B cell (primary cell): ENCODE measurements at regions of chr13 and their contacts with region 1.

Region 1: DNA sequence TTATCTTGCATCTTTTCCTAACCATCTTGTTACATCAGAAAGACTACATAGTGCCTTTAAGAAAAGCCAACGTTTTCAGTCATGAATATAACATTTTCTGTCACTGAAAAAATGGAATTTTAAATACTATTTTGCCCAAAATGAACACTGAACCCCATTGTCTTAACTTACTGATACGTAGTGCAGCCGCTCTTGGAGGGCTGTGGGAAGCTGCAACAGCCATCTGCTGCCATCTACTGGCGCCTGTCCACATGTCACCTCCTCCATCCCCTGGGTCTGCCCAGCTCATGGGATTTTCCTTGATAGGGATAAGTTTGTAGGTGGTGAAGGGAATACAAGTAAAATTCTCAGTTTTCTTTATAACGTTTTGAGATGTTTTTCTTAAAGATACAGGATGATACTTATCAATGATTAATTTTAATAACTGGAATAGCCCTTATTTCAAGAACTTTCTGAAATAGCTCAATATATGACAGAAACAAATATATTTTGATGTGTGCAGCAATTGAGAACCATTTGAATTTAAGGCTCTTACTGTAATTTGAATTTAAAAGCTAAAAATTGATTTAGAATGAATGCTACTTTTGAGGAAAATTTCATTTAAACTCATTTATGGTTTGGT is 73.7 kb downstream of the GGACT start:
- DNase-seq: peak; percentile 74
- ATAC-seq: peak; percentile 84
- H3K4me3 ChIP-seq: no peak overlapping the region
- H3K4me3 Mint-ChIP-seq: no peak overlapping the region
- H3K27ac ChIP-seq: no peak overlapping the region
- H3K27ac Mint-ChIP-seq: no peak overlapping the region
- H3K4me1 ChIP-seq: no peaks in the 10 kb centered on the region
- H3K4me1 Mint-ChIP-seq: peaks cover 3% of the 10 kb centered on the region
- H3K27me3 ChIP-seq: no peaks in the 10 kb centered on the region
- H3K27me3 Mint-ChIP-seq: no peaks in the 10 kb centered on the region
- CTCF ChIP-seq: peak; percentile 95

Region 2: DNA sequence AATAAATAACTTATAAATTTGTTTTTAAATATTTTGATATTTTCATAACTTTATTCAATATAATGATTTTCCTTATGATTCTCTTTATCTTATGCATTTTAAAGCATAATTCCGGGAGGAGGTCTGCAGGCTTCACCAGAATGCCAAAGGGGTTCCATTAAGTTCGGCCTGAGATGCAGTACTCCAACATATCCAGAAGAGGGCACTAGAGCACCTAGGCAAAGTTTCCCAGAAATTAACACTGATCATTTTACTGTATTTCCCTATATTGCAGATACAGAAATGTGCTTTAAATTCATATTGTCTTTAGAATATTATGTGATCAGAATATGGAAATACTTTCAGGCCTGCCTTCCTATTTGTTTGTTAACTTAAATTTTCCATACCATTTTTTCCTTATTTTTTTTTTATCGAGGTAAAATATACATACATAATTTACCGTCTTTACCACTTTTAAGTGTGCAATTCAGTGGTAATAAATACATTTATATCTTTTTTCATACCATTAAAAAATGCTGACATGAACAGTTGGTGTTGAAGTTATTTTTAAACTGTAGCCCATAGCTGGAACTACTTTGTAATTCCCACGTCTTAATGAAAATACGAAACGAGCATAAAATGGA is 1072.5 kb before region 1 on chr13:
- CTCF ChIA-PET with region 1: interaction called, 8 read pairs
- POLR2A ChIA-PET with region 1: no interaction called
- intact Hi-C with region 1: loop called (anchors 1 kb)
- DNase-seq: peak; percentile 76
- ATAC-seq: peak; percentile 80
- H3K4me3 ChIP-seq: no peak overlapping the region
- H3K4me3 Mint-ChIP-seq: no peak overlapping the region
- H3K27ac ChIP-seq: no peak overlapping the region
- H3K27ac Mint-ChIP-seq: no peak overlapping the region
- H3K4me1 ChIP-seq: peaks cover 14 to 17% of the 10 kb centered on the region in 2 donors
- H3K4me1 Mint-ChIP-seq: peaks cover 15% of the 10 kb centered on the region
- H3K27me3 ChIP-seq: no peaks in the 10 kb centered on the region
- H3K27me3 Mint-ChIP-seq: no peaks in the 10 kb centered on the region
- CTCF ChIP-seq: peak; percentile 99

Region 3: GRCh38 chr13:99528547-99528946 is 986.4 kb before region 1 on chr13:
- CTCF ChIA-PET with region 1: interaction called, 8 read pairs
- POLR2A ChIA-PET with region 1: no interaction called
- intact Hi-C with region 1: loop called (anchors 2 kb)
- DNase-seq: peak; percentile 64
- ATAC-seq: no peak
- H3K4me3 ChIP-seq: no peak overlapping the region
- H3K4me3 Mint-ChIP-seq: no peak overlapping the region
- H3K27ac ChIP-seq: no peak overlapping the region
- H3K27ac Mint-ChIP-seq: no peak overlapping the region
- H3K4me1 ChIP-seq: no peaks in the 10 kb centered on the region
- H3K4me1 Mint-ChIP-seq: peaks cover 11% of the 10 kb centered on the region
- H3K27me3 ChIP-seq: no peaks in the 10 kb centered on the region
- H3K27me3 Mint-ChIP-seq: no peaks in the 10 kb centered on the region
- CTCF ChIP-seq: peak; percentile 52

Region 4: DNA sequence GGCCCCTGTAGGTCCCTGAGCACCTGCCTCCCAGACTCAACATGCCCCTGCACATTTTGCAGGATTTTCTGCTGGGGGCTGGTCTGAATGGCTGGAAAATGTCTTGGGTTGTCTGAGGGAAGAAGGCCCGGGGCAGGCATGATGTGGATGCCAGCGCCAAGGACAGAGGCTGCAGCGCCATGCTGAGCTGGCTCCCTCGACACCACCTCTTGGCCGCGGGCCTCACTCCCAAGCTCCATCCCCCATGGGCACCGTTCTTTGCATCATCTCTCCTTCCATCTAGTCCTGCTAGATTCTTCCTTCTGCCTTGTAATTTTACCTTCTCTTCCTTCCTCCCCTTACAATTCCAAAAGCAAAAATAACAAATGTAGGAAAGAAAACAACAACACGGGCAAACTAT is 613.9 kb before region 1 on chr13:
- CTCF ChIA-PET with region 1: interaction called, 11 read pairs
- POLR2A ChIA-PET with region 1: no interaction called
- intact Hi-C with region 1: loop called (anchors 1 kb)
- DNase-seq: no peak
- ATAC-seq: no peak
- H3K4me3 ChIP-seq: no peak overlapping the region
- H3K4me3 Mint-ChIP-seq: no peak overlapping the region
- H3K27ac ChIP-seq: no peak overlapping the region
- H3K27ac Mint-ChIP-seq: no peak overlapping the region
- H3K4me1 ChIP-seq: no peaks in the 10 kb centered on the region
- H3K4me1 Mint-ChIP-seq: peaks cover 2% of the 10 kb centered on the region
- H3K27me3 ChIP-seq: peaks cover 0 to 60% (median 19%) of the 10 kb centered on the region in 4 experiments
- H3K27me3 Mint-ChIP-seq: peaks cover 68% of the 10 kb centered on the region
- CTCF ChIP-seq: no peak

Region 5: DNA sequence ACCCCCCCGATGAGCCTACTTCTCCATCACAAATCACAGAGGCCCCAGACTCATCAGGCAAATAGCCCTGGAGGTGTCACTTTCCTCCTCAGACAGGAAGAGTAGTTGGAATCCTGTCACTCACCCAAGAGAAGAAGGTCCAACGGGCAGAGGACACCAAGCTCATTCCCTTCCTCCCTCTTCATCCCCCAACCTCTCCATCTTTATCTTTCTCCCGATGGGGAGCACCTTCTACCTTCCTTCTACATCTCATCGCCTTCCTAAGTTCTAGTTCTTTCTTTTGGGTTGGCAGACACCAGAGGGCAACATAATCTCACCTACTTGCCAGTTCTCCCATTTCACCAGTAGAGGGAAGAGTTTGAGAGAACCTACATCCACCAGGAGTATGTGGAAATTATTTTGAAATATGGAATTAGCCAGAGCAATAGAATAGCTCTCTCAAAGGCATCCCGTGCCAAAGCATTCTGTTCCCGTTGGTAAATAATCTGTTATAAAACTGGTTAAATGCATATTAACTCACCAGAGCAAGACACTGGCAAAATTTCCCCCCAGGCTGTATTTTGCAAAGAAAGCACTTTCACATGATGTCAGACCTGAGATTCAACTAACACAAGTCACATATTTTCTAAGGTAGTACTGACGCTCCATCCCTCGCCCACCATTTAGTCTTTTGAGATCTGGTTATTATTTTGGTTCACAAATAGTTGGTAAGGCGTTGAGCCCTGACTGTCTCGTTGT is 598.4 kb before region 1 on chr13:
- CTCF ChIA-PET with region 1: interaction called, 15 read pairs
- POLR2A ChIA-PET with region 1: no interaction called
- intact Hi-C with region 1: no loop called
- DNase-seq: peak; percentile 57
- ATAC-seq: peak; percentile 58
- H3K4me3 ChIP-seq: no peak overlapping the region
- H3K4me3 Mint-ChIP-seq: no peak overlapping the region
- H3K27ac ChIP-seq: no peak overlapping the region
- H3K27ac Mint-ChIP-seq: no peak overlapping the region
- H3K4me1 ChIP-seq: no peaks in the 10 kb centered on the region
- H3K4me1 Mint-ChIP-seq: no peaks in the 10 kb centered on the region
- H3K27me3 ChIP-seq: peaks cover 0 to 18% (median 9%) of the 10 kb centered on the region in 4 experiments
- H3K27me3 Mint-ChIP-seq: peaks cover 14% of the 10 kb centered on the region
- CTCF ChIP-seq: peak; percentile 78